IMR-90 (cell line): ENCODE measurements at regions of chr17 and their contacts with region 1.

Region 1: DNA sequence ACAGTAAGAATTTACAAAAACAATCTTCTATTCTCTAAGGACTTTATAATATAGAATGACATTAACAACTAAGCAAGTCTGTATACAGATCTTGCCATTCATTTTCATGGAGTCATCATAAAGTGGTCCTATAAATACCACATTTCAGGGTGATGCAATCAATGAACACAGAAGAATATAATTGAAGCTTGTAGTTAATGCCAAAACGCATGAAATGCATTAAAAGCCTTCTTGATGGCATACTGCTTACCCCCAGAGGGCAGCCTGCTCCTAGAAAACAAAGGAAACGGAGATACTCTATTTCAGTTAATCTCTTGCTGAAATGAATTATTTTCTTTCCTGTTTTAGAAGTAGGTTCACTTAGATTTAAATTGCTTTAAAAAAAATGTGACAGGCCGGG is 45.2 kb upstream of the STAC2 start:
- DNase-seq: peak; percentile 81
- ATAC-seq: peak; percentile 85
- H3K4me3 ChIP-seq: no peak overlapping the region
- H3K27ac ChIP-seq: no peak overlapping the region
- H3K4me1 ChIP-seq: no peaks in the 10 kb centered on the region
- H3K27me3 ChIP-seq: no peaks in the 10 kb centered on the region
- CTCF ChIP-seq: peak; percentile 69
- POLR2A ChIP-seq: no peak
- RAD21 ChIP-seq: peak; percentile 80

Region 2: GRCh38 chr17:39325528-39326240 is 54.8 kb after region 1 on chr17:
- CTCF ChIA-PET with region 1: no interaction called
- POLR2A ChIA-PET with region 1: no interaction called
- dilution Hi-C with region 1: no loop called
- in situ Hi-C with region 1: no loop called
- intact Hi-C with region 1: loop called (anchors 5 kb)
- DNase-seq: no peak
- ATAC-seq: no peak
- H3K4me3 ChIP-seq: no peak overlapping the region
- H3K27ac ChIP-seq: no peak overlapping the region
- H3K4me1 ChIP-seq: peaks cover 2% of the 10 kb centered on the region; the same call in 1 of the 2 replicates
- H3K27me3 ChIP-seq: no peaks in the 10 kb centered on the region
- CTCF ChIP-seq: no peak
- POLR2A ChIP-seq: no peak
- RAD21 ChIP-seq: no peak

Region 3: DNA sequence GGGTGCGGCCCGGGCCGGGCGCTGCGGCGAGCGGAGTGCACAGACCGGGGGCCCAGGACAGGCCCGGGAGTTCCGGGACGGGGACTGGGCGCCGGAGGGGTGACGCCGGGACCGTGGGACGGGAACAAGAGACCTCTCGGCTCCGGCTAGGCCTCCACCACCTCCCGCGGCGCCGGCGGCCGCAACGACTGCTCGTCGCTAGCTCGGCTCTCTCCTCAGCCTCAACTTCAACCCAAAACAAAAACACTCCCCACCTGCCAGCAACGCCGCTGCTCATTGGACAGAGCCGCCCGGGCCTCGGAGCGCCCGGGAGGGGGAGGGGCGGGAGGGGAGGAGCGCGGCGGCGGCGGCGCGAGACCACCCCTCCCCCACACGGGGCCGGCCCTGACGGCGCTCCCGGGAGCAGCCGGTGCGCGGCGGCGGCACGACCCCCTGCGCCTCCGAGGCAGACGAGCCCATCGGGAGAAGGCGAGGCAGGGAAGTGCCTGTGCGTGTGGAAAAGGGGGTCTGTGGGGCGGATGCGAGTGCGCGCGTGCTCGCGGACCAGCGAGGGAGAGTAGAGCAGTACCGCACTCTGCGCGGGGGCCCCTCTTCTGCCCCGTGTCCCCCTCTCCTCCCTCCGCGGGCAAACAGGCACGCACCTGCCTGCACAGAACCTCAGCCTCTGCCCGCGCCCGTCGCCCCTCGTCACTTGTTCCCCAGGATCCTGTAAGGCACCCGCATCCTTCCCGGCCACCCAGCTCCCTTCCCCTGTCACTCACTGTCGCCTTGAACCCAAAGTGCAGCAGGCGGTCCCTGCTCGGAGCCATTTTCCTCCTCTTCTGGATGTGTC is 130.7 kb after region 1 on chr17 and contains the start of gene FBXL20:
- CTCF ChIA-PET with region 1: no interaction called
- POLR2A ChIA-PET with region 1: interaction called, 11 read pairs
- dilution Hi-C with region 1: no loop called
- in situ Hi-C with region 1: loop called (anchors 10 kb)
- intact Hi-C with region 1: loop called (anchors 1 kb)
- DNase-seq: peak; percentile 84
- ATAC-seq: peak; percentile 78
- H3K4me3 ChIP-seq: peak within 1 kb of the TSS; percentile 100
- H3K27ac ChIP-seq: peak within 1 kb of the TSS; percentile 87
- H3K4me1 ChIP-seq: peaks cover 7% of the 10 kb centered on the region
- H3K27me3 ChIP-seq: no peaks in the 10 kb centered on the region
- CTCF ChIP-seq: no peak
- POLR2A ChIP-seq: peak; percentile 90
- RAD21 ChIP-seq: no peak
- total RNA-seq, gene FBXL20: 12.2 and 13.8 TPM in 2 replicates

Region 4: GRCh38 chr17:39461113-39461925 is 190.4 kb after region 1 on chr17 and contains the start of gene CDK12:
- CTCF ChIA-PET with region 1: no interaction called
- POLR2A ChIA-PET with region 1: no interaction called
- dilution Hi-C with region 1: no loop called
- in situ Hi-C with region 1: no loop called
- intact Hi-C with region 1: loop called (anchors 10 kb)
- DNase-seq: peak; percentile 100
- ATAC-seq: peak; percentile 91
- H3K4me3 ChIP-seq: peak within 1 kb of the TSS; percentile 82
- H3K27ac ChIP-seq: peak within 1 kb of the TSS; percentile 94
- H3K4me1 ChIP-seq: no peaks in the 10 kb centered on the region
- H3K27me3 ChIP-seq: no peaks in the 10 kb centered on the region
- CTCF ChIP-seq: no peak
- POLR2A ChIP-seq: peak; percentile 96
- RAD21 ChIP-seq: no peak
- total RNA-seq, gene CDK12: 27.1 and 31.1 TPM in 2 replicates

Region 5: GRCh38 chr17:39485555-39485954 is 214.6 kb after region 1 on chr17:
- CTCF ChIA-PET with region 1: no interaction called
- POLR2A ChIA-PET with region 1: no interaction called
- dilution Hi-C with region 1: no loop called
- in situ Hi-C with region 1: no loop called
- intact Hi-C with region 1: loop called (anchors 5 kb)
- DNase-seq: peak; percentile 98
- ATAC-seq: peak; percentile 89
- H3K4me3 ChIP-seq: no peak overlapping the region
- H3K27ac ChIP-seq: peak overlapping the region; percentile 38; the same call in 1 of the 2 replicates
- H3K4me1 ChIP-seq: no peaks in the 10 kb centered on the region; the same call in 1 of the 2 replicates
- H3K27me3 ChIP-seq: no peaks in the 10 kb centered on the region
- CTCF ChIP-seq: no peak
- POLR2A ChIP-seq: no peak
- RAD21 ChIP-seq: no peak